ENCODE measurements at regions of chr6 and their contacts with region 1.

Region 1: DNA sequence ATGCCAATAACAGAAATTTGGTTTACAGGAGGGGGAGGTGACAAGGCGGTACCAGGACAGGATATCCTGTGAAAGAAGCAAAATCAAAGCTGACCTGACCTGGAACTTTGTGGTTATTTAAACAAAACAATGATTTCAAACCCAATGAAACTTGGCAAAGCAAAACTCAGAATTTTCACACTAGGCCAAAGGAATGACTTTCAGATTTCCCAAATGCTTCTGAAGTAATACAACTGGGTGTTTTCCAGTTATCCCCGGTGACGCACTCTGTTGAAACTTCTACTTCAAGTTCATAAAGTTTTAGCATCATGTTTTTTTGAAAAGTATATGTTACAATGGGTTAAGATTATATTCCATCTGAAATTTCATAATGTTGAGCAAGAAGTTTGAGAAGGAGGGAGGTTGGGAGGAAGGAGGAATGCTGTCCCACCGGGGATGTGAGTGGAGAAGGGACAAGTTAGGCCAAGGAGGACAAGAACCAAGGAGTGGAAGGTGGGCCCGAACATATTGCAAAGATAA is 78.1 kb upstream of the TRAF3IP2 start:
- DNase-seq: peak; percentile 93
- ATAC-seq: peak; percentile 81
- H3K4me3 ChIP-seq: no peak overlapping the region
- H3K27ac ChIP-seq: peak overlapping the region; percentile 86; the same call in 1 of the 2 replicates
- H3K4me1 ChIP-seq: peaks cover 10% of the 10 kb centered on the region
- H3K27me3 ChIP-seq: no peaks in the 10 kb centered on the region
- CTCF ChIP-seq: no peak
- POLR2A ChIP-seq: no peak
- RAD21 ChIP-seq: no peak

Region 2: DNA sequence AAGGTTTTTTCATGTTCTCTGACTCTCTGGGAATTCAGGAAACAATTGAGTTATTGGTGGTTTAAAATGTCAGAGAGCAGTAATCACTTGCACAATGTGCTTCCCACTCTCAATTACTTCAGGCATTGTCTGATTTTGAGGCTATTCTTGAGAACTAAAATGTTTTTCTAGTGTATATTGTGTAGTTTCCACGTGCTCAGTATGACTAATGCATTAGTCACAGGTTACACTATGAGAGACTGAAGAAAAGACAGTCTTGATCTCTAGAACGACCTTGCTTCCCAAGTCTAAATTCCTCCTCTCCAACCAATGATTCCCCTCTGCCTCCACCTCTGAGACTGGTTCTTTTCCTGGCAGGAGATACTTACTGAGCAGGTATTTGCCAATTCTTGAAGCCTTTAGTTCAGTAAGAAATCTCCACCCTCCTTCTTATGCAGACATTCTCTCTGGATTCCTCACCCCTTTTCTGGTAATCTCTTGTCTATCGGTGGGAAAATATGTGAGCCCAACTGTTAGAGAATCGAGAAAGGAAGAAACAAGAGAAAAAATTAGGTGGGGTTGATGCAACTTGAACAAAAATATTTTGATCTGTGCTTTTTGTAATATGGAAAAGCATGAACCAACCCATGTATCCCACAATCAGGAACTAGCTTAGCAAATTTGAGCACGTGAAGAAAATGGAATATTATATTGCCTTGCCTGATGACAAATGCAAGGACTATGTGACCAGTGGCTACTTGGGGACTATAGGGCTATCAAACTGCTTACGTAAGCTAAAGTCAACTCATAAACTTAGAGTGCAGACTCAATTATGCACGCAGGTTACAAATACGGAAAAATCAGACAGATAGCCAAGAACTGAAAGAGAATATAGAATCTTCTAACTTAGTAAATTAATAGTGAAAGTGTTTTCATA is 1146.3 kb before region 1 on chr6:
- CTCF ChIA-PET with region 1: no interaction called
- POLR2A ChIA-PET with region 1: no interaction called
- dilution Hi-C with region 1: no loop called
- in situ Hi-C with region 1: no loop called
- intact Hi-C with region 1: no loop called
- DNase-seq: peak; percentile 97
- ATAC-seq: peak; percentile 86
- H3K4me3 ChIP-seq: no peak overlapping the region
- H3K27ac ChIP-seq: peak overlapping the region; percentile 36
- H3K4me1 ChIP-seq: peaks cover 9% of the 10 kb centered on the region
- H3K27me3 ChIP-seq: no peaks in the 10 kb centered on the region
- CTCF ChIP-seq: no peak
- POLR2A ChIP-seq: no peak
- RAD21 ChIP-seq: no peak

Region 3: GRCh38 chr6:111030008-111031007 is 653.5 kb before region 1 on chr6:
- CTCF ChIA-PET with region 1: no interaction called
- POLR2A ChIA-PET with region 1: no interaction called
- dilution Hi-C with region 1: no loop called
- in situ Hi-C with region 1: loop called (anchors 25 kb)
- intact Hi-C with region 1: no loop called
- DNase-seq: no peak
- ATAC-seq: peak; percentile 27
- H3K4me3 ChIP-seq: no peak overlapping the region
- H3K27ac ChIP-seq: no peak overlapping the region
- H3K4me1 ChIP-seq: no peaks in the 10 kb centered on the region; the same call in 1 of the 2 replicates
- H3K27me3 ChIP-seq: no peaks in the 10 kb centered on the region
- CTCF ChIP-seq: no peak
- POLR2A ChIP-seq: no peak
- RAD21 ChIP-seq: no peak

Region 4: DNA sequence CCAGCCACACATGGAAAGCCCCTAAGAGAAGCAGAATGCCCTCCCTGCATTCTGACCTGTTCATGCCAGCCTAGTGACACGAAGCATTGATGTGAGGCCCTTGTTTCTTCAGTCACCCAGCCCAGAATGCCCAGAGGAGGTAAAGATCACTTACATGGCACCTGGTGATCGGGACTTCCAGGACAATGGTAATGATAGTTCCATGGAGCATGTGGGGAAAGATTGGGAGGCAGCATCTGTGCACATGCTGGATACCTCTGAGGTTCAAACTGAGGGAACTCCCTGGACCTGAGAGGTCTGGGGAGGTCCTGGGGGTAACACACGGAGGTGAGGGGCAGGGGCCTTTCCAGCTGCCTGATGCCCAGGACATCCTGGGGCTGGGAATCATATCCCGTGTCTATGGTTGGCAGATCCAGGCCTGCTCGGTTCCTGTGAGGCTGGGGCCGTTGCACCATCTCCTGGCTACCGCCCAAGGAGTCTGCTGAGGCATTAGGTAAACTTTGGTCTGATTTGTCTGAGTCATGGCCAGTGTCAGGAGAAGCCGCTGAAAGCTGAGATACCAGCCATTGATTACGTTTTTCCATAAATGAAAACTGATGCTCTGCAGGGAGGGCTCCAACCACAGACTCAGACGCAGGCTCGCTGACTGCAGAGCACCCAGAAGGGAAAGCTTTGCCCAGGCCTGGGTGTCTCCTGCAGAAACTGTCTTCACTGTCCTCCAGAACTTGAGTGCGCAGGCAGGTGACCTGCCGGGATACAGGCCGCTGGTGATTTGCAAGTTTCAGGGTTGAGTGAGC is 92.5 kb before region 1 on chr6:
- CTCF ChIA-PET with region 1: no interaction called
- POLR2A ChIA-PET with region 1: no interaction called
- dilution Hi-C with region 1: no loop called
- in situ Hi-C with region 1: no loop called
- intact Hi-C with region 1: no loop called
- DNase-seq: peak; percentile 100
- ATAC-seq: peak; percentile 89
- H3K4me3 ChIP-seq: no peak overlapping the region
- H3K27ac ChIP-seq: peak overlapping the region; percentile 93
- H3K4me1 ChIP-seq: peaks cover 29% of the 10 kb centered on the region
- H3K27me3 ChIP-seq: no peaks in the 10 kb centered on the region
- CTCF ChIP-seq: no peak
- POLR2A ChIP-seq: peak; percentile 62; the same call in 1 of the 2 replicates
- RAD21 ChIP-seq: peak; percentile 25